Activated B cell treated with CpG ODN at 0.5 μM for 24 hours (primary cell): ENCODE measurements at regions of chr6 and their contacts with region 1.

Region 1: DNA sequence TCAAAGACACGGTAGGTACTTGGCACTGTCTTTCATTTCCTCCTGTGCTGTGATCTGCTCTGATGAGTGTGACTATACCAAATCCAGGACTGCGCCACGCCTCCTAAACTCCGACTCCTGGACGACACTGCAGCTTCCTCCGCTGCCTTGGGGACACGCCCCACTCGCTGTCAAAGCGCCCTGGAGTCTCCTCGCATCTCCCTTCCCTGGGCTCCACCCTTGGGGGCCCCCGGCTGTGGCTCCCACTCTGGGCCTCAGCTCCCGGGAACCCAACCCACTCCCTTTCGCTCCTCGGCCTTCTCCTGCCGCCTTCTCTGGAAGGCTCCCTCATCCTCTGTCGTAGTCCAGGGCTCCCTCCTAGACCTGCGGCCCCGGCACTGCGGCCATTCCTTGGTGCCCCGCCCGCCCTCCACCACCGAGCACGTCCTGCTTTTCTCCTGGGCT is 61.2 kb downstream of the RSPH3 start:
- DNase-seq: no peak
- ATAC-seq: peak; percentile 76
- H3K4me3 Mint-ChIP-seq: peak overlapping the region; percentile 79
- H3K27ac Mint-ChIP-seq: peak overlapping the region; percentile 36
- H3K4me1 Mint-ChIP-seq: peaks cover 24% of the 10 kb centered on the region
- H3K27me3 Mint-ChIP-seq: no peaks in the 10 kb centered on the region
- CTCF ChIP-seq: no peak

Region 2: GRCh38 chr6:158803733-158804143 is 135.1 kb before region 1 on chr6:
- CTCF ChIA-PET with region 1: no interaction called
- POLR2A ChIA-PET with region 1: interaction called, 11 read pairs
- intact Hi-C with region 1: no loop called
- DNase-seq: no peak
- ATAC-seq: peak; percentile 65
- H3K4me3 Mint-ChIP-seq: peak overlapping the region; percentile 78
- H3K27ac Mint-ChIP-seq: peak overlapping the region; percentile 82
- H3K4me1 Mint-ChIP-seq: peaks cover 95% of the 10 kb centered on the region
- H3K27me3 Mint-ChIP-seq: no peaks in the 10 kb centered on the region
- CTCF ChIP-seq: no peak

Region 3: DNA sequence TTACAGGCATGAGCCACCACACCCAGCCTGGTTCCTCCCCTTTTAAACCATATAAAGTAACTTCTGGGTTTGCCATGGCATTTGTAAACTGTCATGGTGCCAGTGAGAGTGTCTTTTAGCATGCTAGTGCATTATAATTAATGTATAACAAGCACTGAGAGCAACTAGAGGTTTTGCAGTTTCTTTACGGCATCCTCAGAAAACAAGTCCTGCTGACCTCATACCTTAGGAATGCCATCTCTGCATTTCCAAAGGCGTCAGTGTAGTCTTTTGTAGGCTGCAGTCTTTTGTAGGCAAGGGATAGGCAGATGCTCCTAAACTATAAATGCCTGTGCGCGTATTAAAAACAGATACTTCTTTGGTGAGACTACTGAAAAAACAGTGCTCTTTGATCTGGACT is 44.6 kb before region 1 on chr6:
- CTCF ChIA-PET with region 1: no interaction called
- POLR2A ChIA-PET with region 1: no interaction called
- intact Hi-C with region 1: no loop called
- DNase-seq: no peak
- ATAC-seq: no peak
- H3K4me3 Mint-ChIP-seq: no peak overlapping the region
- H3K27ac Mint-ChIP-seq: no peak overlapping the region
- H3K4me1 Mint-ChIP-seq: peaks cover 5% of the 10 kb centered on the region
- H3K27me3 Mint-ChIP-seq: no peaks in the 10 kb centered on the region
- CTCF ChIP-seq: no peak

Region 4: DNA sequence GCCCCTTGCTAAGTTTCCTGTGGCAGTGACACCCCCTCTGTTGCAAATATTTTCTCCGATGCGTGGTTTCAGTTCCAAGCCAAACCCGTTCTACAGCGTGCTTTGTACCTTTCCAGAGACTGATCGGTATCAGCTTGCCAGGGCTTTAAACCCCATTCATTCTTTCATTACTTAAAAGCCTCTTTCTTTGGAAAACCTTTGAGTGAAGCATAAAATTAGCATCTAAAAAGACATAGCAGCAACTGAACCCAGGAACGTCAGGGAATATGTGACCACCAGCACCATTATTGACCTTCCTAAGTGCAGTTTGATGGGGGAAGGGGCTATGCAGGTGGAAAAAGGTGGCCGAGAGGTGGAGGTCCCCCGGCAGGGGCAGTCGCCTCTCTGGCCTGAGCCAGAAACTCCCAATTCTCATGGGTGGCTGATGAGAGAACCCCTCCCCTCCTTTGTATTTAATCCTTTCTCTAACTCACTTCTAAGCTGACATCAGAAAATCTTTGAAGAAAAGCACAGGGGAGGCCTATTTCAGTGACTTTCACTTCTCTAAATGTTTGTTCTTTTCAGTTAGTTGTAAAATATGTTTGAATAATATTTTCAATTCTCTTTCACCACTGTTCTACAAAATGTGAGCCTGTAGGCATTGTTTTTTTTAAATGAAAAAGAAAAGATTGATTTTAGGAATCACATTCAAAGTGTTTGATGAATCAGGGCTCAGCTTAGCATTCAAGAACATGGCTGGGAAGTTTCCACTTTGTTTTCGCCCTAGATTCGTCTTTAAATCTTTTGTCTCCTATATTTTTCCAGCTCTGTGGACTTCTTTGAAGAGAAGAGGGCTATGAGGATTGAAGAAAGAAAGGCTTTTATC is 28.1 kb before region 1 on chr6:
- CTCF ChIA-PET with region 1: no interaction called
- POLR2A ChIA-PET with region 1: interaction called, 7 read pairs
- intact Hi-C with region 1: loop called (anchors 2 kb)
- DNase-seq: peak; percentile 36
- ATAC-seq: peak; percentile 76
- H3K4me3 Mint-ChIP-seq: peak overlapping the region; percentile 80
- H3K27ac Mint-ChIP-seq: peak overlapping the region; percentile 96
- H3K4me1 Mint-ChIP-seq: peaks cover 58% of the 10 kb centered on the region
- H3K27me3 Mint-ChIP-seq: no peaks in the 10 kb centered on the region
- CTCF ChIP-seq: no peak

Region 5: GRCh38 chr6:158923805-158924498 is 14.9 kb before region 1 on chr6:
- CTCF ChIA-PET with region 1: no interaction called
- POLR2A ChIA-PET with region 1: no interaction called
- intact Hi-C with region 1: loop called (anchors 2 kb)
- DNase-seq: no peak
- ATAC-seq: no peak
- H3K4me3 Mint-ChIP-seq: no peak overlapping the region
- H3K27ac Mint-ChIP-seq: no peak overlapping the region
- H3K4me1 Mint-ChIP-seq: peaks cover 11% of the 10 kb centered on the region
- H3K27me3 Mint-ChIP-seq: no peaks in the 10 kb centered on the region
- CTCF ChIP-seq: no peak